Panc1 (cell line): ENCODE measurements at regions of chr11 and their contacts with region 1.

Region 1: GRCh38 chr11:37002831-37003230 is 404.8 kb upstream of the RAG2 start:
- DNase-seq: no peak
- ATAC-seq: no peak
- H3K4me3 ChIP-seq: no peak overlapping the region
- H3K27ac ChIP-seq: no peak overlapping the region
- H3K4me1 ChIP-seq: no peaks in the 10 kb centered on the region
- H3K27me3 ChIP-seq: no peaks in the 10 kb centered on the region
- CTCF ChIP-seq: no peak

Region 2: DNA sequence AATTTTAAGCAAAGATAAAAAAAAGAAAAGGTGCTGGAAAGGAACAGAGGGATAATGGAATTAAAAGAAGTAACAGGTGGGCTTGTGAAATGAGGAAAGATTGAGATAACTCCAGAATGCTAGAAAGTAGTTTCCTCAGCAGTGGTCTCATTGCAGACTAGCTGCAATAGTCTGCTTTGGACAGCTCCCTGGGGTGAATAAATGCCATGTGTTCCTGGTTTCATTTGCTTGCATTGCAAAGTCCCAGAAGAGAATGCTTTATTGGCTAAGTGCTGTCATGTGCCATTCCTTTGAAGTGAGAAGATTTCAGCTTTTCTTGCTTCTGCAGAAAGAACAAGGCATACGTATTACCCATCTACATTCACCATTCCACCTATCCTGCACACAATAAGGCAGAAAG is 74.0 kb after region 1 on chr11:
- CTCF ChIA-PET with region 1: no interaction called
- POLR2A ChIA-PET with region 1: no interaction called
- in situ Hi-C with region 1: no loop called
- intact Hi-C with region 1: no loop called
- DNase-seq: no peak
- ATAC-seq: no peak
- H3K4me3 ChIP-seq: no peak overlapping the region
- H3K27ac ChIP-seq: no peak overlapping the region
- H3K4me1 ChIP-seq: no peaks in the 10 kb centered on the region
- H3K27me3 ChIP-seq: no peaks in the 10 kb centered on the region
- CTCF ChIP-seq: no peak

Region 3: GRCh38 chr11:38766796-38767195 is 1764.0 kb after region 1 on chr11:
- CTCF ChIA-PET with region 1: interaction called, 10 read pairs
- POLR2A ChIA-PET with region 1: no interaction called
- in situ Hi-C with region 1: no loop called
- intact Hi-C with region 1: no loop called
- DNase-seq: no peak
- ATAC-seq: no peak
- H3K4me3 ChIP-seq: no peak overlapping the region
- H3K27ac ChIP-seq: no peak overlapping the region
- H3K4me1 ChIP-seq: no peaks in the 10 kb centered on the region
- H3K27me3 ChIP-seq: no peaks in the 10 kb centered on the region
- CTCF ChIP-seq: no peak